Heart left ventricle (tissue), 16 donors: ENCODE measurements at regions of chr1 and their contacts with region 1.

Region 1: DNA sequence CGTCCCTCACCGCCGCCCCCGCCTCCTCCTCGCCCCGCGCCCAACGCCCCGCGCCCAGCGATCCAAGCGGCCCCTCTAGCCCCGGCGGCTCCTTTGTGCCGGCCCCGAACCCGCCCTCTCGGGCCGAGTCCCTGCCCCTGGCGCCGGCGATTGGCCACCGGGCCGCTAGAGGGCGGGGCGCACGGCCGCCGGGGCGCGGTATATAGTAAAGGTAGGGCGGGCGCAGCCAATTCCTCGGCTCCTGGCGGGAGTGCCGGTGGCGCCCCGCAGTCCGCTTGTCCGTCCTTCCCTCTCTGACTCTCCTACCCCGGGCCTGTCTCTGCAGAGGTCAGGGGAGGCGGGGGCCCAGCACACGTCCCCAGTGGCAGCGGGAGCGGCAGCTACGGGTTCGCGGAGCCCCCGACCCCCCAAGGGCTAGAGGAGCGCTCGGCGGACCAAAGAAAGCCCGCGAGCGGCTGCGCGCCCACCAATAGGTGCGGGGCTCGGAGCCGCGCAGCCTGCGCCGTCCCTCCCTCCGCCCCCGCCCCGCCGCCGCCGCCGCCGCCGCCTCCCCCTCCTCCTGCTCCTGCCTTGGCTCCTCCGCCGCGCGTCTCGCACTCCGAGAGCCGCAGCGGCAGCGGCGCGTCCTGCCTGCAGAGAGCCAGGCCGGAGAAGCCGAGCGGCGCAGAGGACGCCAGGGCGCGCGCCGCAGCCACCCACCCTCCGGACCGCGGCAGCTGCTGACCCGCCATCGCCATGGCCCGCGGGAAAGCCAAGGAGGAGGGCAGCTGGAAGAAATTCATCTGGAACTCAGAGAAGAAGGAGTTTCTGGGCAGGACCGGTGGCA is at the start of gene ATP1B1:
- DNase-seq: peak; percentile 89 to 94 (median 90)
- ATAC-seq: peak; percentile 53 to 89 (median 79)
- H3K4me3 ChIP-seq: peak within 1 kb of the TSS; percentile 72 to 95 (median 88)
- H3K27ac ChIP-seq: peak within 1 kb of the TSS; percentile 83 to 98 (median 94)
- H3K4me1 ChIP-seq: peaks cover 0 to 63% (median 25%) of the 10 kb centered on the region in 12 donors
- H3K27me3 ChIP-seq: peaks cover 0 to 9% (median 0%) of the 10 kb centered on the region in 9 donors
- CTCF ChIP-seq: peak; percentile 46 to 79 (median 64)
- POLR2A ChIP-seq: peak; percentile 73 to 97
- total RNA-seq, gene ATP1B1: 245 to 640 (median 339) TPM

Region 2: GRCh38 chr1:168603501-168604110 is 502.7 kb before region 1 on chr1:
- intact Hi-C with region 1: loop called in 1 of 10 experiments (anchors 10 kb)
- DNase-seq: peak; percentile 69 to 86 (median 79)
- ATAC-seq: peak; percentile 63 to 91 (median 90)
- H3K4me3 ChIP-seq: no peak overlapping the region
- H3K27ac ChIP-seq: no peak overlapping the region
- H3K4me1 ChIP-seq: peaks cover 0 to 17% (median under 1%) of the 10 kb centered on the region in 12 donors
- H3K27me3 ChIP-seq: no peaks in the 10 kb centered on the region
- CTCF ChIP-seq: peak; percentile 68 to 90 (median 82)
- POLR2A ChIP-seq: no peak

Region 3: DNA sequence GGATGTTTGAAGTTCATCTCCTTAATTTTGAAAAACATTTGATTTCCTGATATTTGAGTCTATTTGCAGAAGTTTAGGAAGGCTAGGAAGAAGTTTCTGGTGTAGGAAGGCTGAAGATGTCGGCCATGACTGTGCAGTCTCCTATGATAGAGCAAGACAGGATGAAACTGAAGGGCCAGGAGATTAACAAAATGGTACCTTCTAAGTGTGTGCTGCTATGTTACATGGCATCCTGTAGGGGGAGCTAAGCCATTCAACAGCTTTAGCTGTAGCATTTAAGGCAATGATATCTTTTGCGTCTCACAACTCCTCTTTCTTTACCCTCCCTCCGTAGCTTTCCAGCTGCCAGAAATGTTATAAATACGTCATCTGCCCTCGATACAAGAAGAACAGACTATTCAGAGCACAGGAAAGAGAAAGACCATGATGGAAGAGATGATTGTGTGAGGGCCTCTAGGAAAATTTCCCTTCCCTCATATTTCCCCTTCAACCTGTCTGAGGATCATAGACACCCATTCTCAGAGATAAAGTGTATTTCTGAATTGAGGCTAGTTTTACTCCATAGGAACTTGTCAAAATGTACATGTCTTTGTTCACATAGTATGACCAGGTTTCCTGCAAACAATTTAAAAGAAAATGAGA is 468.8 kb before region 1 on chr1:
- intact Hi-C with region 1: loop called in 4 of 10 experiments (anchors 1 to 10 kb)
- DNase-seq: no peak
- ATAC-seq: peak in 3 of 4 donors; percentile 35 to 66 (median 61)
- H3K4me3 ChIP-seq: no peak overlapping the region
- H3K27ac ChIP-seq: peak overlapping the region in 10 of 12 donors; percentile 27 to 82 (median 52)
- H3K4me1 ChIP-seq: peaks cover 0 to 15% (median 3%) of the 10 kb centered on the region in 12 donors
- H3K27me3 ChIP-seq: no peaks in the 10 kb centered on the region
- CTCF ChIP-seq: peak; percentile 35 to 65 (median 54)
- POLR2A ChIP-seq: no peak

Region 4: DNA sequence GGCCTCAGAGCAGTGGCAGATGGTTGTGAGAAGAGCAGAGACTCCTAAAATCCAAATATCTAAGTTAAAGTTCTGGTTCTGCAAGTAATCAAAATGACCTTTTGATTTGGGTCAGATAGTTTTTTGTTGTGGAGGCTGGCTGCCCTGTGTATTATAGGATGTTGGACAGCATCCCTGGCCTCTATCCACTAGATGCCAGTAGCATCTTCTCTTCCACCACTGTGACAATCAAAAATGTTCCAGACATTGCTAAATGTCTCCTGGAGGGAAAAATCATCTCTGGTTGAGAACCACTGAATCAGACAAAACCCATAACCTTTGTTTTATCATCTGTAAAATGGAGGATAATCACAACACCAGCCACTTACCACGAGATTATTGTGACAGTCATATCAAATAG is 371.4 kb before region 1 on chr1:
- intact Hi-C with region 1: loop called in 2 of 10 experiments (anchors 5 to 10 kb)
- DNase-seq: no peak
- ATAC-seq: peak in 1 of 4 donors; percentile 41
- H3K4me3 ChIP-seq: no peak overlapping the region
- H3K27ac ChIP-seq: peak overlapping the region in 1 of 12 donors; percentile 6
- H3K4me1 ChIP-seq: peaks cover 0 to 23% (median 8%) of the 10 kb centered on the region in 12 donors
- H3K27me3 ChIP-seq: no peaks in the 10 kb centered on the region
- CTCF ChIP-seq: peak in 5 of 12 donors; percentile 9 to 35 (median 16)
- POLR2A ChIP-seq: no peak

Region 5: DNA sequence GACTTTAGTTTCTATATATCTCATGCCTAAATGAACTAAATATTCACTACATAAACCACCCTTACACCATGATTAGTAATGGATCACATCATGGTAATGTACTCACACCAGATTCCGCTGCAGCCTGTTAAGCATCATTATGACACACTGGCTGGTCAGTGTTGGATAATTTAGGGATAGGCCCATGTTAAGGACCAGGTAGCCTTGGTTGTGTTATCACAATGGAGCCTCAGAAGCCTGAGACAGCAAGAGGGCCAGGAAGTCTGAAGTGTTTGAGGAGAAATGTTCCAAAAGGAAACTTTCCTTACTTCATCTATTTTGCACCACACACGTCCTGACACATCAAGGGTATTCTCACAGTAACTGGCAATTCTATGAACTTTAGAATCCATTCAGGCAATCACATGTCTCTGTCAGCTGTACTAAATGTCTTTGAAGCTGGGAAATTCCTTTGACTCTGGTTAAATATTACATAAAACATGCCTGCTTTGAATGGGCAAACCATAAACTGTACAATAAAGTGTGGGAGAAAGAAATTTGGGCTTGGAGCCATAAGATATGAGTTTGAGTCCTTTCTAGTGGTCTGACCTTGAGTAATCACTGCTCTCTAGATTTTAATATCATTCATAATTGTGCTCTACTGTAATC is 272.0 kb before region 1 on chr1:
- intact Hi-C with region 1: loop called in 2 of 10 experiments (anchors 10 kb)
- DNase-seq: no peak
- ATAC-seq: peak; percentile 58 to 74 (median 60)
- H3K4me3 ChIP-seq: no peak overlapping the region
- H3K27ac ChIP-seq: peak overlapping the region in 7 of 12 donors; percentile 15 to 61 (median 27)
- H3K4me1 ChIP-seq: peaks cover 0 to 35% (median 6%) of the 10 kb centered on the region in 12 donors
- H3K27me3 ChIP-seq: no peaks in the 10 kb centered on the region
- CTCF ChIP-seq: no peak
- POLR2A ChIP-seq: no peak

Region 6: DNA sequence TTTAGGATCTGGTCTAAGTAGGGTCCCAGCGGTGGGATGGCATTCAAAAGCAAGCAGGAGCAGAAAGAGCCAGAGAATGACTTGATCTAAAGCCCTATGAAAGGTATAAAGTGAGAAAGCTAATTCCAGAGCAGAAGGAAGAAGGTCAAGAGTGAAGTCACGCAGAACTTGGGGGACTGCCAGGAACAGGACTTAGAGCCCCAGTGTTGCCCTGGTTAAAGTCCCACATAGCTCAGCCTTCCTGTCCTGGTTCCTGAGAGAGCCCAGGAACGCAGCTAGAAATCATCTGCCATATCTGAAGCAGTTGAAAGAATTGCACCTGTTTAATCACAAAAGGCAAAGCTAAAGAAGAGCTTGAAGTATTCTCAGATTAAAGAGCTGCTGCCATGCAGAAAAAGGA is 160.4 kb before region 1 on chr1:
- intact Hi-C with region 1: loop called in 2 of 10 experiments (anchors 10 kb)
- DNase-seq: peak in 4 of 5 donors; percentile 57 to 88 (median 73)
- ATAC-seq: peak; percentile 86 to 99 (median 95)
- H3K4me3 ChIP-seq: no peak overlapping the region
- H3K27ac ChIP-seq: peak overlapping the region in 10 of 12 donors; percentile 2 to 62 (median 50)
- H3K4me1 ChIP-seq: peaks cover 0 to 13% (median 11%) of the 10 kb centered on the region in 12 donors
- H3K27me3 ChIP-seq: no peaks in the 10 kb centered on the region
- CTCF ChIP-seq: no peak
- POLR2A ChIP-seq: no peak

Region 7: DNA sequence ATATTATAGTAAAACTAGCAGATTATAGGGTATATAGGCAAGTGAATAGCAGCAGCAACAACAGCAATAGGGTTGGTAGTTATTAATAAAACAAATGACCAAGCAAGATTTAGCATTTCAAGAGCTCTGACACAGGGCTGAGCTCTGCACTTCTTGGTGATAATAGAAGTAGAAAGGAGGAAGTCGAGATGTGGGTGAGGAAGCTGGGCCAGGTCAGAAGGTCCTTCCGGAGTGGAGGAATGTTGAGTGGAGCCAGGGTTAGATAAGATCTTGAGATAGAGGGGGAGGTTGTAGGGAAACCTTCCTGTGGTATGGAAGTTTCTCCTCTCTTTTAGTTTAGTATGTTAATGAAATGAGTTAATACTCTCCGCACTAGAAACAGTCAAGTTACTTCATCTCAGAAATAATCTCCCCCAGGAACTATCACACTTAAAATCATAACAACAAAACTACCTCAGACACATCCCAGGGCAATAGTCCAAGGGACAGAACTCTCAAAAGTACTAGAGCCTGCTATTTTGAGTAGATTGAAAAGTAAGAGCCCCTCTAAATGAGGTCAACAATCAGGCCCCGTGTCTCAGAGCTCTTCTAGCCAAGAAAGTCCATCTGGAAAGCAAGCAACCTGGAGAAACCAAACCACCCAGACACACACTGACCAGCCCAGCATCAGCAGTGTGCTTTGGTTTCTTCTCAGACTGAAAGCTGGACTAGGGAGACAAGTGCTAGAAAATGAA is 45.2 kb before region 1 on chr1:
- intact Hi-C with region 1: no loop called
- DNase-seq: peak in 1 of 5 donors; percentile 32
- ATAC-seq: peak; percentile 26 to 70 (median 58)
- H3K4me3 ChIP-seq: no peak overlapping the region
- H3K27ac ChIP-seq: peak overlapping the region in 1 of 12 donors; percentile 75
- H3K4me1 ChIP-seq: peaks cover 0 to 22% (median 8%) of the 10 kb centered on the region in 12 donors
- H3K27me3 ChIP-seq: no peaks in the 10 kb centered on the region
- CTCF ChIP-seq: no peak
- POLR2A ChIP-seq: no peak